ENCODE measurements at regions of chr14 and their contacts with region 1.

Region 1: DNA sequence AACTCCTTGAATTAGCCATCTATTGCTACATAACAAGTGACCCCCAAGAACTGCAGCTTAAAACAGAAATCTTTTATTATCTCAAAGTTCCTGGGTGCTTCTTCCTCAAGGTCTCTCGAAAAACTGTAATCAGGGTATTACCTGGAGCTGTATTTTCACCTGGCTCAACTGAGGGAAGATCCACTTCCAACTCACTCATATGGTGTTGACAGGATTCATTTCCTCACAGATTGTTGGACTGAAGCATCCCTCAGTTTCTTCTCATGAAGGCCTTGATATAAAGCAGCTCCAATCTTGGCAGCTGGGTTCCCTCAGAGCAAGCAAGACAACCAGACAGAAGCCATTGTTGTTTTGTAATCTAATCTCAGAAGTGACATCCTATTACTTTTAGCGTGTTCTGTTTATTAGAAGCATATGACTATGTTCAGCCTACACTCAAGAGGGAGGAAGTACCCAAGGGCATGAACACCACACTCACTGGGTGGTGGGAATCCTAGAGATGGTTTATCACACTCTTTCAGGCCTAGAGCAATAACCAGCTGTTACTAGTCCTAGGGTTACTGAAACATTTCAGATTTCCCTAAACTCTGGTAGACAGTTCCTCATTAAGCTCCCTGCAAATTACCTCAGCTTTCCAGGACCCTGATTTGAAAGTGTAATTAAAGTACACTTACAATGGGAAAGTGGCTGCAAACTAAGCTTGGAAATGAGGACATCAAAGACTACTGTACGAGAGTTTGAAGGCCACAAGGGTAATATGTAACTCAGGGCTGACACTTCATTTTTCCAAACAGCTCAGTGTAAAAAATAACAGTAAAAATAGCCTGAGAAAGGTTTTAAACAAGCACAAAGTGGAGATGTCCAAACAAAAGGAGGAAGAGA is 222.2 kb downstream of the SEC23A start:
- DNase-seq: no peak
- H3K4me3 Mint-ChIP-seq: no peak overlapping the region
- H3K27ac Mint-ChIP-seq: no peak overlapping the region
- H3K4me1 Mint-ChIP-seq: no peaks in the 10 kb centered on the region
- H3K27me3 Mint-ChIP-seq: no peaks in the 10 kb centered on the region
- CTCF ChIP-seq: no peak

Region 2: DNA sequence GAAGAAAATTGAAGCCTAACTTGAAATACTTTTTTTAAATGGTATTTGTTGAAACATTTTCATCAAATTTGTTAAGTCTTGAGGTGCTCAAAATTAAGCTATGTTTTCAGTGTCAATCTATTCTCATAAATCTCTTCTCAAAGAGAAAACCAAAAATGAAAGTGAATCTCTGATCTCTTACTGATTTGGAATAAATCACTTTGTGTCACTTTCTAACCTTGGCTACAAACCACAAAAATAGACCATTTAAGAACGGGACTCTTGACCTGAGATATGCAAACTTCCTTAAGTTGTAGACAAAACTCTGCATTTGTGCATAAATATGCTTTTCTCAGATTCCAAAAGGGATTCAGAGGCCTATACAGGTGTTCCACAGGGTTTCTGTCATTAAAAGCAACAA is 29.2 kb after region 1 on chr14:
- CTCF ChIA-PET with region 1: interaction called, 3 read pairs
- POLR2A ChIA-PET with region 1: no interaction called
- intact Hi-C with region 1: loop called (anchors 1 kb)
- DNase-seq: no peak
- H3K4me3 Mint-ChIP-seq: no peak overlapping the region
- H3K27ac Mint-ChIP-seq: no peak overlapping the region
- H3K4me1 Mint-ChIP-seq: no peaks in the 10 kb centered on the region
- H3K27me3 Mint-ChIP-seq: no peaks in the 10 kb centered on the region
- CTCF ChIP-seq: no peak